G401 (cell line): ENCODE measurements at regions of chr15 and their contacts with region 1.

Region 1: DNA sequence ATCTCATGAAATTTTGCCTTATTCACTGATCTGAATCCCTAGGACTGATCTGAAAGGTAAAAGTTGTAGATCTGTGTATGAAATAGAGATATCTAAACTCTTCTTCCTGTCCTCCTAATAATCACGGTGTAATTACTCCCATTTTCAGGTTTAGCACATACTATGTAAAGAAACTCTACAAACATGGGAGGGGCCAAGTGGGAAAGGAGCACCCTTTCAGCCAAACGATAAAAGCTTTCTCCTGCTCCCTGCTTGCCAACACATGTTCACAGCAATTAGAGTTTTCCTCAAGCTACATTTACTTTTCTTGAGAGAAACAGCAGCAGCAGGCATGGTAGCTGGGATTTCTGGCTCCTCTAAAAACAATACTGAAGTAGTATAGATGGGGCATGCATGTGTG is 71.6 kb downstream of the CHAC1 start:
- DNase-seq: no peak

Region 2: GRCh38 chr15:40906091-40906990 is 118.5 kb before region 1 on chr15:
- in situ Hi-C with region 1: loop called (anchors 5 kb)
- DNase-seq: peak; percentile 69

Region 3: DNA sequence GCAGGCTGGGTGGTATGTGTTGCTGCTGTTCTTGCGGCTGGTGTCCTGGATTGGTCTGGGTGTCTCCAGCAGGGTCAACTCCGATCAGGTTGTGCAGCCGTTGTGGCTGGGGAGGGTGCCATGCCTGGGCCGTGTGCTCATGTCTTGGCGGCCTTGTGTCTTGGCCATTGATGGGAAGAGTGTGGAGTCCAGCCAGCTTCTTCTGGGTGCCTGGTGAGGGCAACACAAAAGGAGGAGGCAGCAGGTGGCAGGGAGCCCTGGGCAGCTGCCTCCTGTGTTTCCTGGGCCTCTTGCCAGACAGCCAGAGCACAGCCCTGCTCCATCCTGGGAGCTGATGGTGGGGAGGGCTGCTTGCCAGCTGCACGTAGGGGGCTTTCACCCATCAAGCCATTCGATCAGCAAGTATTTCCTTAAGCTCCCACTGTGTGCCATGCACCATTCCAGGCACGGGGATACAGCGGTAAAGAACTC is 67.3 kb before region 1 on chr15:
- in situ Hi-C with region 1: no loop called
- DNase-seq: peak; percentile 4

Region 4: GRCh38 chr15:40968290-40969085 is 56.4 kb before region 1 on chr15:
- in situ Hi-C with region 1: no loop called
- DNase-seq: no peak